PC-9 (cell line): ENCODE measurements at regions of chr17 and their contacts with region 1.

Region 1: GRCh38 chr17:66549731-66550207 is 247.4 kb downstream of the PRKCA start:
- DNase-seq: peak; percentile 16 to 63
- H3K4me3 ChIP-seq: no peak overlapping the region
- H3K27ac ChIP-seq: peak overlapping the region; percentile 12; the same call in 1 of the 2 replicates
- H3K4me1 ChIP-seq: peaks cover 55% of the 10 kb centered on the region
- H3K27me3 ChIP-seq: no peaks in the 10 kb centered on the region
- CTCF ChIP-seq: no peak

Region 2: GRCh38 chr17:66459811-66460270 is 89.9 kb before region 1 on chr17:
- CTCF ChIA-PET with region 1: no interaction called
- POLR2A ChIA-PET with region 1: interaction called, 11 read pairs
- intact Hi-C with region 1: no loop called
- DNase-seq: peak; percentile 51 to 94
- H3K4me3 ChIP-seq: no peak overlapping the region
- H3K27ac ChIP-seq: peak overlapping the region; percentile 73
- H3K4me1 ChIP-seq: peaks cover 50% of the 10 kb centered on the region
- H3K27me3 ChIP-seq: no peaks in the 10 kb centered on the region
- CTCF ChIP-seq: no peak

Region 3: GRCh38 chr17:66580184-66580955 is 30.6 kb after region 1 on chr17:
- CTCF ChIA-PET with region 1: no interaction called
- POLR2A ChIA-PET with region 1: no interaction called
- intact Hi-C with region 1: no loop called
- DNase-seq: peak; percentile 25 to 48
- H3K4me3 ChIP-seq: no peak overlapping the region
- H3K27ac ChIP-seq: peak overlapping the region; percentile 3; the same call in 1 of the 2 replicates
- H3K4me1 ChIP-seq: peaks cover 8% of the 10 kb centered on the region; the same call in 1 of the 2 replicates
- H3K27me3 ChIP-seq: no peaks in the 10 kb centered on the region
- CTCF ChIP-seq: no peak

Region 4: GRCh38 chr17:66661381-66661843 is 111.6 kb after region 1 on chr17:
- CTCF ChIA-PET with region 1: no interaction called
- POLR2A ChIA-PET with region 1: no interaction called
- intact Hi-C with region 1: loop called (anchors 5 kb)
- DNase-seq: peak; percentile 82 to 95
- H3K4me3 ChIP-seq: no peak overlapping the region
- H3K27ac ChIP-seq: peak overlapping the region; percentile 3; the same call in 1 of the 2 replicates
- H3K4me1 ChIP-seq: peaks cover 19% of the 10 kb centered on the region
- H3K27me3 ChIP-seq: no peaks in the 10 kb centered on the region
- CTCF ChIP-seq: no peak